ENCODE measurements at regions of chr12 and their contacts with region 1.

Region 1: DNA sequence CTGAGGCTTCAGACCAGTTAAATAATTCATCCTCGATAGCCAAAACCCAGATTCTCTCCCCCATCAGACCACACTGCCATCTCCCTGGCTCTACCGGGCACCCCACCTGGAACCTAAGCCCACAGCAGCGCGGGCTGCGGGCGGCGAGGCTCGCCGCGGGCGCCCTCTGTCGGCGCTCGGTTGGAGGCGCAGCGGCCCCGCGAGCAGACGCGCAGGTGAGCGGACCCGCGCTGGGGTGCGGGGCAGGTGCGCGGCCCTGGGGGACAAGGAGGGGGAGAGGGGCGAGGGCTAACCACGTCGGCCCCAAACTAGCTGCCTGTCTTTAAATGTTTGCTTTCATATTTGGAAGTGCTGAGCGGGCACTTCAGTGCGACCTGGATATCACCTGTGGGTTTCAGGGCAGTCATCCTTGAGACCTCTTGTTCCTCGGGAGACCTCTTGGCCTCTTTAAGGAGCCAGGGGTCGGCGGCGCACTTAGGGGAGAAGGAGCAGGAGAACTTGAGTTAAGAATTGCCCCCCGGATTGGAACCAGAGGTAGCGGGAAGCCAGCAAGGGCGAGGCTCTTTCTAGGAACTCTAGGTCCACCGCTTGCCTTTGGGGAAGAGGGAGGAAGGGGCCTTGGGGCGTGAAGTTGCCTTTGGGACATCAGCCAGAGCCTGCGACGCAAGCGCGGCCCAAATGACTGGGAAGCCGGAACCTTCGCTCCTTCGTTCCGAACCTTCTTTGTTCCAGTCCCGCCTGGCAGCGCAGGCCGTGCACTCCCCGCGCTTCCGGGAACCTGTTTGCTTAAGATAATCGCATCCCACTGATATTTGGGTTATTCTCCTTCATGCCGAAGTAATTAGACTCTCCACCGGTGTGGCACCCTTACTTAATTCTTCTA is 78.7 kb downstream of the NEDD1 start:
- DNase-seq: peak; percentile 30
- H3K4me3 Mint-ChIP-seq: peak overlapping the region; percentile 61
- H3K27ac Mint-ChIP-seq: no peak overlapping the region
- H3K4me1 Mint-ChIP-seq: peaks cover 6% of the 10 kb centered on the region
- H3K27me3 Mint-ChIP-seq: peaks cover 10% of the 10 kb centered on the region

Region 2: GRCh38 chr12:96578526-96579125 is 407.1 kb before region 1 on chr12:
- CTCF ChIA-PET with region 1: interaction called, 20 read pairs
- intact Hi-C with region 1: loop called (anchors 1 kb)
- DNase-seq: no peak
- H3K4me3 Mint-ChIP-seq: no peak overlapping the region
- H3K27ac Mint-ChIP-seq: no peak overlapping the region
- H3K4me1 Mint-ChIP-seq: peaks cover 9% of the 10 kb centered on the region
- H3K27me3 Mint-ChIP-seq: peaks cover 5% of the 10 kb centered on the region

Region 3: GRCh38 chr12:96828169-96828789 is 157.4 kb before region 1 on chr12:
- CTCF ChIA-PET with region 1: no interaction called
- intact Hi-C with region 1: loop called (anchors 5 kb)
- DNase-seq: peak; percentile 32
- H3K4me3 Mint-ChIP-seq: no peak overlapping the region
- H3K27ac Mint-ChIP-seq: no peak overlapping the region
- H3K4me1 Mint-ChIP-seq: no peaks in the 10 kb centered on the region
- H3K27me3 Mint-ChIP-seq: no peaks in the 10 kb centered on the region

Region 4: DNA sequence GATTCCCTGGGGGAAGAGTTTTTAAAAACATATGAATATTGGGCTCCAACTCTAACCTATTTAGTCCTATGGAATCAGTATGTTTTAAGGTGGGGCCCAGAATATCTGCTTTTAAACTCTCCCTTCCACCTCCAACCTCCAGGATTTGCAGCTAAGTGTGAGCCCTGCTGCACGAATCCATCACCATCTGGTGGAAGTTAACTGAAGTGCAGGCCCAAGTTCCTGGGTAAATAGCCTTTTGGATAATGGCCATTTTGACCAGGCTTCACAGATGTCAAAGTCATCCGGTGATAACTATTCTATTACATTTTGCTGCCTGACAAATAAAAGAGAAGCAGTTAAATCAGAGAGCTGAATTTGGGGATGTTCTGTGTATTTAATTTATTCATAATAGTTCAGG is 418.8 kb after region 1 on chr12:
- CTCF ChIA-PET with region 1: interaction called, 4 read pairs
- intact Hi-C with region 1: loop called (anchors 2 kb)
- DNase-seq: peak; percentile 39
- H3K4me3 Mint-ChIP-seq: no peak overlapping the region
- H3K27ac Mint-ChIP-seq: no peak overlapping the region
- H3K4me1 Mint-ChIP-seq: no peaks in the 10 kb centered on the region
- H3K27me3 Mint-ChIP-seq: no peaks in the 10 kb centered on the region

Region 5: GRCh38 chr12:98002712-98003493 is 1017.2 kb after region 1 on chr12:
- CTCF ChIA-PET with region 1: no interaction called
- intact Hi-C with region 1: loop called (anchors 2 kb)
- DNase-seq: peak; percentile 58
- H3K4me3 Mint-ChIP-seq: no peak overlapping the region
- H3K27ac Mint-ChIP-seq: no peak overlapping the region
- H3K4me1 Mint-ChIP-seq: peaks cover 3% of the 10 kb centered on the region
- H3K27me3 Mint-ChIP-seq: peaks cover 7% of the 10 kb centered on the region